Right ventricle myocardium inferior (tissue), 1 donor: ENCODE measurements at regions of chr12 and their contacts with region 1.

Region 1: GRCh38 chr12:9074484-9075137 is 41.1 kb downstream of the A2M start:
- DNase-seq: peak; percentile 47
- ATAC-seq: no peak

Region 2: DNA sequence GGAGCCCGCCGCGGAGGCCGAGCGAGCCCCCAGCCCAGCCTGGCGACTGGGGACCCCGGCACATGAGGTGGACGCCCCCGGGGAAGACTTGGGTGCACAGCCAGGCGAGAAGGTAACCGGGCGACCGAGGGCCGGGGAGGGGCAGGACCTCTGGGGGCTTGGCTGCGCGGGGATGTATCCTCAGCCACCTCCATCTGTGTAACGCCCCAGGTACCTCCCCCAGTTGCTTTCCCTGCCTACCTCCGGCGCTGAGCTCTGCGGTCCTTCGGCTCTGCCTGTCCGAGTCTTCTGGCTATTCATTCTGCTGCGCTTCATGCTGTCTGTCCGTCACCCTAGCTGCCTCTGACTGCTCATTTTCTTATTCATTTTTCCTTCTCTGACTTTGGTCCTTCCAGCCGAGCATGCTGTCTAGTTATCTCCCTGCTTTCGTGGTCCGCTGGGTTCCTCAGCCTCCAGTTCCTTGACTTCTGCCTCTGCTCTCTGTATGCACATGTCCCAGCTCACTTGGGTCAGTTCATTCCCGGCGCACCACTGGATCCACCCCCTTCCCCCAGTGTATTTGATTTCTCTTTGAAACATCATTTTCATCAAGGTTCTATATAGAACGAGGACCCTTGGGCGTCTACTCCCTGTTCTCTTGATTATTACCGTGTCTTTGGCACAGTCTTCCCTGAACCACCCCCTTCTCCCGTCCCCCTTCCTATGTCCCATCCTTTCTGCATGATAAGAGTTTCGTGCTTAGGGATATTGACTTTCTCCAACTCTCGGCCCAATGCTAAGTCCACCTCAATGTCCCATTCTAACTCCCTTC is 159.7 kb before region 1 on chr12:
- intact Hi-C with region 1: no loop called
- DNase-seq: peak; percentile 70
- ATAC-seq: peak; percentile 58

Region 3: GRCh38 chr12:9103050-9103849 is 28.6 kb after region 1 on chr12:
- intact Hi-C with region 1: loop called (anchors 1 kb)
- DNase-seq: no peak
- ATAC-seq: no peak

Region 4: DNA sequence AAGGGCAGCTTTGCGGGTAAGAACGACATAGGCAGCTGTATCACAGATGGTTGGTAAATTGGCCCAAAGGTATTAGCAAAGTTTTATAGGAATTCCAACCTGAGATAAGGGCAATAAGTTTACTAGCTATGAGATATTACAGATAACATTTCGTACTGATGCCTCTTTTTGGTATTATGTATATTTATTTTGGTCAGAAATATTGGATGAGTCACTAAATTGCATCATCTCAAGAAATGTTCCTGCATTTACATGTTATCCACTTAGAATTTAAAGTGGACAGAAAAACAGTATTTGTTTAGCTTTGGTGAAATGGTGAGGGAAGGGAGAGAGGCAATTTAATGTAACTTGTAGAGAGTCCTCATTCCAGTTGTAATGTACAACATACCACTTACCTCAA is 198.7 kb after region 1 on chr12:
- intact Hi-C with region 1: no loop called
- DNase-seq: no peak
- ATAC-seq: no peak